ENCODE measurements at regions of chr12 and their contacts with region 1.

Region 1: DNA sequence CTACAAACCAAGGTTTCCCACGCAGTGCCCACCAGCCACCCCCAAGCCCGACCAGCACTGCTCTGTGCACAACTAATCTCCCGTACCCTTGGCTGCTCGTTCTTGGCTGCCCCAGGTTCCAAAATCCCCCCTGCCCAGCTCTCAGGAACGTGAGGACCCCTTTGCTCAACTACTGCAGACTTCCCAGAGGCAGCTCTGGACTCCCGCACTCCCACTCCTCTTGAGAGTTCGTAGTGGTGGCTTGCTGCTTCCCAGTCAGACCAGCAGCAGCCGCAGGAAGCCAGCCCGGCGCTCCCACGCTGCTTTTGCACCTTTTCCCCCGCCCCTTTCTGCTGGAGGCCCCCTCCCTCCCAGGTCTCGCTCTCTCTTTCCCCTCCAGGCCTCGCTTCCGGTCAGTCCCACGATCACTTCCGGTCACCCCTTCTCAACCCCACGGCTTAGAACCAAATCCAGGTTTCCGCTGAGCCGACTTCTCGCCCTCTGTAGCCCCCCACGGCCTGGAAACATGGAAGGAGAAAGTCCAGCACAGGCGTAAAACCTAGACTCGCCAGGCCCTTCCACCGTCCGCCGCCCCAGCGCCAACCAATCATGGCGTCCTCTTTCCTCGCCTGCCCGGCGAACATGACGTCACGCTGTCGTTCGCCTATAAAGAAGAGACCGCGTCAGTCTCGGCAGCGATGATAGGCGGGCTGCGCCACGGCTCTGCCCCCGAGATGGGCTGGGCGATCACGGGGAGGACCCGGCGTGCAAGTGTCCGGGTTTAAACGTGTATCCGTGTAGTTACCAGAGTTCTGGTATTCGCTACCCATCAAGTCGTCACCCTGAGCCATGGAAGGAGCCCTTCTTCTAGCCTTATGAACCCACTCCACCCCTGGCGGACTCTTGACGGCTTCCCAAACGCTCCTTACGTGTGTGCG is at the start of gene TFCP2:
- DNase-seq: peak; percentile 93
- H3K4me3 Mint-ChIP-seq: peak within 1 kb of the TSS; percentile 85
- H3K27ac Mint-ChIP-seq: peak within 1 kb of the TSS; percentile 78
- H3K4me1 Mint-ChIP-seq: peaks cover 8% of the 10 kb centered on the region
- H3K27me3 Mint-ChIP-seq: peaks cover 3% of the 10 kb centered on the region
- total RNA-seq, gene TFCP2: 49.1 and 49.8 TPM in 2 replicates

Region 2: GRCh38 chr12:50167041-50167828 is 1005.5 kb before region 1 on chr12 and contains the start of gene CERS5:
- intact Hi-C with region 1: loop called (anchors 5 kb)
- DNase-seq: peak; percentile 98
- H3K4me3 Mint-ChIP-seq: peak within 1 kb of the TSS; percentile 99
- H3K27ac Mint-ChIP-seq: peak within 1 kb of the TSS; percentile 95
- H3K4me1 Mint-ChIP-seq: peaks cover 38% of the 10 kb centered on the region
- H3K27me3 Mint-ChIP-seq: no peaks in the 10 kb centered on the region
- total RNA-seq, gene CERS5: 64.2 and 67.9 TPM in 2 replicates

Region 3: GRCh38 chr12:51025836-51026638 is 146.7 kb before region 1 on chr12 and contains the start of gene SLC11A2:
- intact Hi-C with region 1: loop called (anchors 2 kb)
- DNase-seq: peak; percentile 91
- H3K4me3 Mint-ChIP-seq: peak within 1 kb of the TSS; percentile 92
- H3K27ac Mint-ChIP-seq: peak within 1 kb of the TSS; percentile 98
- H3K4me1 Mint-ChIP-seq: peaks cover 55% of the 10 kb centered on the region
- H3K27me3 Mint-ChIP-seq: peaks cover 18% of the 10 kb centered on the region
- total RNA-seq, gene SLC11A2: 56.9 and 63.9 TPM in 2 replicates

Region 4: DNA sequence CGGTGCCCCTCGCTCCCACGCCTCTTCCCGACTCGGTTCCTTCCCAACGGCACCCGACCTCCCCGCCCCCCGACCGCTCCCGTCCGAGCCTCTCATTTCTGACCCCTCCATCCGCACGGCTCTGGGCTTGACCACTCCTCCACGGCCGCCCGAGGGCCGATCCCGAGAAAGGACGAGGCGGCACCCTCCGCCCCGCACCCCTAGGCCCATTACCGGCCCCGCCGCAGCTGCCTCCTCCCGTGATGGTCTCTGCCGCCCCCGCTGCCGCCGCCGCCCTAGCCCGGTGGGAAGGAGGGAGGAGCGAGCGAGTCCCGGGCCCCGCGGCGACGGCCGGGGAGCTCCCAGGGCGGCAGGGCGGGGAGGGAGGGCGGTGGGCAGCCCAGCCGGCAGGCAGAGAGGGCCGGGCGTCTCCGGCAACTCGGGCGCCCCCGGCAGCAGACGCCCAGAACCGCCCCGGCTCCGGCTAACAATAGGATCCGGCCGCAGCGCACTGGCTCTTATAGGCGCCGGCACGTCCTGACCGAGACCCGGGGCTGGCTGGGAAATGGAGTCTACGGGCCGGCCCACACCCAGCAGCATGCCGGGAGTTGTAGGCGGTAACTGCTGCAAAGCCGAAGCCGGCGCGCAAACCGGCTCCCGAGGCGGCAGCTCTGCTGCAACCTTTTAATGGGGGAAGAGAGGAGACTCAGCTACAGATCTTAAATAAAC is 89.5 kb before region 1 on chr12 and contains the start of gene CSRNP2:
- intact Hi-C with region 1: loop called (anchors 1 kb)
- DNase-seq: peak; percentile 94
- H3K4me3 Mint-ChIP-seq: peak within 1 kb of the TSS; percentile 99
- H3K27ac Mint-ChIP-seq: peak within 1 kb of the TSS; percentile 91
- H3K4me1 Mint-ChIP-seq: peaks cover 34% of the 10 kb centered on the region
- H3K27me3 Mint-ChIP-seq: peaks cover 3% of the 10 kb centered on the region
- total RNA-seq, gene CSRNP2: 28.6 and 35.2 TPM in 2 replicates

Region 5: DNA sequence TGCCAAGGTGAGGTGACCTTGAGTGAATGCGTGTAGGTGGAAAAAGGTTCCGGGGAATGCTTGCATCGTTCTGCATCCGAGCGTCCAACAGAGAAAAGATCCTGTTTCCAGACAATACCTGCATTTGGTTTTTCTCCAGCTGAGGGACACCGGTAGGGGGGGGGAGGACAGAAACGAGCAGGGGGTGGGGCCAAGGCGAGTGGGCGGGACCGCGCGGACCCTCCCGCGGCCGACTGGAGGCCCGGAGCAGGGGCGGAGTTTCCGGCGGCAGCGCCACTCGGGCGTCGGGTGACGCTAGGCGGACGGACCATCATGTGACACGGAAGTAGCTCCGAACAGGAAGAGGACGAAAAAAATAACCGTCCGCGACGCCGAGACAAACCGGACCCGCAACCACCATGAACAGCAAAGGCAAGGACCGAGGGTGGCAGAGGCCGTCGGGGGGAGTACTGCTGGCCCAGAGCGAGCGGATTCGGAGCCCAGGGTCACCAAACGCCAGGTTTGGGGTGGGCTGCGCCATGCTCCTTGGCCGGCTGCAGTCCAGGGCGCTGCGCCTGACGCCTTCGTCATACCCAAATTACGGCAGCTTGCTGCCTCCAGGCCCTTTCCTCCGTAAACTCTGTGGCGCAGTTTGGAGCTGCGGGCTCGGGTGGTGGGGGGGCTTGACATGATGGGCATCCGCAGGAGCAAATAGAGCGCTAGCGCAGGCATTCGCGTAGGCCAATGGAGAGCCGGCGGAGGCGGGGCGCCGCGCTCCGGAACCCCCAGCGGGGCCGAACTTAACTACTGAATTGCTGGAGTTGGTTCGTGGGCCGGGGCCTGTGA is 65.9 kb after region 1 on chr12 and contains the start of gene DAZAP2:
- intact Hi-C with region 1: loop called (anchors 1 kb)
- DNase-seq: peak; percentile 92
- H3K4me3 Mint-ChIP-seq: peak within 1 kb of the TSS; percentile 91
- H3K27ac Mint-ChIP-seq: peak within 1 kb of the TSS; percentile 99
- H3K4me1 Mint-ChIP-seq: peaks cover 45% of the 10 kb centered on the region
- H3K27me3 Mint-ChIP-seq: no peaks in the 10 kb centered on the region
- total RNA-seq, gene DAZAP2: 163 and 169 TPM in 2 replicates

Region 6: DNA sequence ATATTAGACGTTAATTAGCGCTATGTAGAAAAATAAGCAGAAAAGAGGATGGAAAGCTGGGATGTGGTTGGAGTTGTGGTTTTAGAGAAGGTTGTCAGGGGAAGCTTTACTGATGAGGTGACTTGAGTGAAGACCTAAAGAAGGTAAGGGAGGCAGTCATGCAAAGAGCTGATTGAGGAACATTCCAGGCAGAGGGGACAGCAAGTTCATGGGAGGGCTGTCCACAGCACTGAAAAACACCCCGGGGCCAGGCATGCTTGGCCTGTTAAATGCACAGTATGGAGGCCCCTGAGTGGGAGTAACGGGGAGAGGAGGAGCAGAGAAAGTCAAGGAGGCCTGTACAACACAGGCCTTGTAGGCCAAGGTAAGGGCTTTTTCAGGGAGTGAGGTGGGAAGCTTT is 81.8 kb after region 1 on chr12:
- intact Hi-C with region 1: no loop called
- DNase-seq: no peak
- H3K4me3 Mint-ChIP-seq: no peak overlapping the region
- H3K27ac Mint-ChIP-seq: no peak overlapping the region
- H3K4me1 Mint-ChIP-seq: no peaks in the 10 kb centered on the region
- H3K27me3 Mint-ChIP-seq: no peaks in the 10 kb centered on the region

Region 7: GRCh38 chr12:51326762-51327439 is 154.1 kb after region 1 on chr12:
- intact Hi-C with region 1: loop called (anchors 5 kb)
- DNase-seq: peak; percentile 6
- H3K4me3 Mint-ChIP-seq: peak overlapping the region; percentile 55
- H3K27ac Mint-ChIP-seq: peak overlapping the region; percentile 89
- H3K4me1 Mint-ChIP-seq: peaks cover 75% of the 10 kb centered on the region
- H3K27me3 Mint-ChIP-seq: no peaks in the 10 kb centered on the region

Region 8: GRCh38 chr12:52050761-52051541 is 878.2 kb after region 1 on chr12 and contains the start of gene NR4A1:
- intact Hi-C with region 1: loop called (anchors 5 kb)
- DNase-seq: peak; percentile 96
- H3K4me3 Mint-ChIP-seq: peak within 1 kb of the TSS; percentile 96
- H3K27ac Mint-ChIP-seq: peak within 1 kb of the TSS; percentile 92
- H3K4me1 Mint-ChIP-seq: peaks cover 42% of the 10 kb centered on the region
- H3K27me3 Mint-ChIP-seq: no peaks in the 10 kb centered on the region
- total RNA-seq, gene NR4A1: 52.7 and 60.3 TPM in 2 replicates

Measured in activated T-helper 1 cell treated with anti-CD3 and anti-CD28 coated beads, Interleukin-12 subunit alpha, Interleukin-12 subunit beta, Interleukin-2, Interleukin-4 antibody, amounts not matched to agents 30 ng/mL and 10 ng/mL and 1 ng/mL, durations not matched to agents 14 hours and 24 hours and 36 hours (primary cell).